Adrenal gland (tissue), 19 donors: ENCODE measurements at regions of chr16 and their contacts with region 1.

Region 1: DNA sequence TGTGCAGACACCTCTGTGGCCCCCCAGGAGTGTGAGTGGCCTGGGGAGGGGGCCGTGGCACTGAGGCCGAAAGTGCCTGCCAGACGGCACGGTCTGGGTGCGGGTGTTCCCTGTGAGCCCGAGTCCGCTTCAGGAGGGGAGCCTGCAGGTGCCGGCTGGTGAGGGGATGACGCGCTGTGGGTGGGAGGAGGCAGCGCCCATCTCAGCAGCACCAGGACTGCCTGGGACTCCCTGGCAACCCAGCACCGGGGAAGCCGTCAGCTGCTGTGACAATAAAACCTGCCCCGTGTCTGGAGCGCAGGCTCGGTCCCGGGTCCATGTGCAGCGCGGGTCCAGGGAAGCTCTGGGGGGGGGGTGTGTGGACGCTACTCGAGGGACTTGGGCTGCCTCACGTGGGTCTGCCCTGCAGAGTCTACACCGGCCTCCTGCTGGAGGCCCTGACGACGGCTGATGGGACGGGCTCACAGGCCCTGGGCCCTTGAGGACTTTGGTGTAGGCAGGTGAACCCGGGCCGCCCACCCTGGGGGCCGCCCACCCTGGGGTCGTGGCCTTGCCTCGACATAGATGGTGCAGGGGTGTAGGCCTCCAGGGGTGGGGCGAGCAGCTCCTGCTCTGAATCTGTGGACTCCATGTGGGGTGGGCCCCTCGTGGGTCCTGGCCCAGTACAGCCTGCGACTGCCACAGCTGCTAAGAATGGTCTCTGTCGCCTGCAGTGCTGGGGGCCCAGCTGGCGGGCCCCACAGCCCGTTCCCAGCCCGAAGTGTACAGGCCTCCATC is 5.9 kb upstream of the RAB40C start:
- DNase-seq: peak in 2 of 7 donors; percentile 26 to 79
- H3K4me3 ChIP-seq: no peak overlapping the region
- H3K27ac ChIP-seq: no peak overlapping the region
- H3K4me1 ChIP-seq: peaks cover 7 to 17% of the 10 kb centered on the region in 2 donors
- H3K27me3 ChIP-seq: no peaks in the 10 kb centered on the region
- CTCF ChIP-seq: no peak
- POLR2A ChIP-seq: no peak

Region 2: GRCh38 chr16:117379-118365 is 466.3 kb before region 1 on chr16:
- intact Hi-C with region 1: no loop called
- DNase-seq: peak; percentile 55 to 77 (median 68)
- H3K4me3 ChIP-seq: no peak overlapping the region
- H3K27ac ChIP-seq: no peak overlapping the region
- H3K4me1 ChIP-seq: peaks cover 9 to 17% of the 10 kb centered on the region in 2 donors
- H3K27me3 ChIP-seq: no peaks in the 10 kb centered on the region
- CTCF ChIP-seq: peak; percentile 41 to 71 (median 62)
- POLR2A ChIP-seq: no peak

Region 3: DNA sequence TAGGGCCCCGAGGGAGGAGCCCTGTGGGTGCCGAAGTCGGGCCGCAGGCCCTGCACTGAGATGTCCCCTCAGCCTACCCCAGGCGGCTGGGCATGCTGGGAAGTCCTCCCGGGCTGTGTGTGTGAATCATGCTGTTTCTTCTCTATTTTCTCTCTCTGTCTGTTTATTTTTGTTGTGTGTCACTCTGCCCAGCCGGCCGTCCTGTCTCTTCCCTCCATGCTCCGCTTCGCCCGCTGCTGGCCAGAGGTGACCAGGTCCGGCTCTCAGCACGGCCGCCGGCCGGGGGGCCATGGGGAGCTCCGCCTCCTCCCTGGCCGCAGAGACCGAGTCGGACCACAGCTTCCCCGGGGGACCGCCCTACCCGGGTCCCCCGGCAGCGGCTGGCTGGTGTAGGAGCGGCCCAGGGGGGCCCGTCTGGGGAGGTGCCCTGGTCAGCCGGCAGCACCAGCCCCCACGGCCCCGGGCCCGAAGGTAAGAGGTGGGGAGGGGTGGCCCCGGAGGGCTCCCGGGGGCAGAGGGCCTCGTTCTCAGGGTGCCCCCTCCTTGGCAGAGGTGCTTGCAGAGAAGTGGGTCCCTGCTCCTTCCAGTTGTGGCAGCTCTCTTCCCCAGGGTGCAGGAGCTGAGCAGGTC is 44.0 kb before region 1 on chr16:
- intact Hi-C with region 1: loop called in 1 of 2 experiments (anchors 5 kb)
- DNase-seq: no peak
- H3K4me3 ChIP-seq: no peak overlapping the region
- H3K27ac ChIP-seq: no peak overlapping the region
- H3K4me1 ChIP-seq: peaks cover 0 to 8% of the 10 kb centered on the region in 2 donors
- H3K27me3 ChIP-seq: no peaks in the 10 kb centered on the region
- CTCF ChIP-seq: no peak
- POLR2A ChIP-seq: no peak

Region 4: DNA sequence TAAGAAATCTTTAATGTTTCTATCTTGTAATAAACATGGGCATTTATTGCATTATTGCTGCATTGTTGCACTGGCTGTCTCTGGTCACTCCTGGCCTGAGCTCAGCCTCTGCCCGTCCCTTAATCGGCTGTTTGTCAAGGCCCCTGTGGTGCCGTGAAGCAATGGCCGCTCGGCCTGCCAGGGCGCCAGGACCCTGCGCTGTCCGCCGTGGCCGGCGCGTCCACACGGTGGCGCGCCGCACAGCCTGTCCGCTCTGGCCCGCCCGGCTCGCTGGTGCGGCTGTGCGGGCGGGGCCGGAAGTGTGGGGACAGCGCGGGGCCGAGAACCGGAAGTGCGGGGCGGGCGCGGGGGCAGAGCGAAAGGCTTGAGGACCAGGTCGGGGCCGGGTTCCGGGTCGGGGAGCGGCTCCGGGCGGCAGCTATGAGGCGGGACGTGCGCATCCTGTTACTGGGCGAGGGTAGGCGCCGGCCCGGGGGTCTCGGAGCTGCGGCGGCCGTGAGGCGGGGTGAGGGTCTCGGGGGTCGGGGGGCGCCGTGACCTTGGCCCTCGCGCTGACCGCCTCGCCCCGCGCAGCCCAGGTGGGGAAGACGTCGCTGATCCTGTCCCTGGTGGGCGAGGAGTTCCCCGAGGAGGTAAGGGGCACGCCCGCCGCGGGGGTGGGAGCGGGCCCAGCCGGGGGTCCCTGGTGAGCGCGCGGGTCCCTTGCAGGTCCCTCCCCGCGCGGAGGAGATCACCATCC is 83.9 kb after region 1 on chr16 and contains the start of gene RHOT2:
- intact Hi-C with region 1: loop called in 1 of 2 experiments (anchors 5 kb)
- DNase-seq: peak; percentile 92 to 96 (median 94)
- H3K4me3 ChIP-seq: peak within 1 kb of the TSS; percentile 73 to 87 (median 83)
- H3K27ac ChIP-seq: peak within 1 kb of the TSS; percentile 25 to 93 (median 80)
- H3K4me1 ChIP-seq: peaks cover 7 to 18% of the 10 kb centered on the region in 2 donors
- H3K27me3 ChIP-seq: no peaks in the 10 kb centered on the region
- CTCF ChIP-seq: peak; percentile 32 to 97 (median 69)
- POLR2A ChIP-seq: peak in 1 of 2 donors; percentile 64
- total RNA-seq, gene RHOT2: 34.7 to 177 (median 82.7) TPM